K562 (cell line): ENCODE measurements at regions of chr19 and their contacts with region 1.

Region 1: DNA sequence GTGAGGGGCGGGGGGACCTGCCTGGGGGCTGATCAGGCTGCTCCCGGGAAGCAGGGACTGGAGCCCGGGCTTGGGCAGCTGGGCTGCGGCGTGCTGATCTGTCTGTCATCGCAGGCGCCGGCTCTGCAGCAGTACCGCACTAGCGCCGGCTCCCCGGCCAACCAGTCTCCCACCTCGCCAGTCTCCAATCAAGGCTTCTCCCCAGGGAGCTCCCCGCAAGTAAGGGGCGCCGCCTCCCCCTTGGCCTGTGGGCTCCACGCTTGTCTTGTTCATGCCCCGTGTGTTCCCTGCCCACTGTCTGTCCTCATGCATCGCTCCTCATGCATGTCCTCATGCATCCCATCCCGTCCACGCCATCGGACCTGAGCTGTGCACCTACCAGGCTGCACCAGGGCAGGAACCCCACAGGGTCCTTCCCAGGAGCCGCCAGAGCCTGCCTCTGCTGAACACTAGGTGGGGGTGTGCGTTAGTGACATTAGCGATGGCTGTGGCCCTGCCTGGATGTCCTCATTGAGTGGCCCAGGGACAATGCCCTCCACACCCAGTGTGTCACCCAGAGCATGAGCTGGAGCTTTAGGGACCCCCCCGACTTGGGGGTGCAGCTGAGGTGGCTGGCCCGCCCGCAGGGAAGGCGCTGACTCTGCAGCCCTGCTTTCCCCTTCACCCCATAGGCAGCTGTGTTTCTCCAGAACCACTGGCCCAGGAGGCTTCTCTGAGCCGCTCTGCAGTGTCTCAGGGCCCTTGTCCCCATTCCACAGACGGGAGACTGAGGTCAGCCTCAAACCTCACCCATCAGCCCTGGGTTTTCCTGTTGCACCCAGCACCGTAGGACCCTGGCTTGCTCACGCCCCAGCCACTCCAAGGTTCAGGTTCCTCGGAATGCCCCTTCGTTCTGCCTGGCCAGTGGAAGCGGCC is 19.5 kb downstream of the COMP start:
- DNase-seq: peak in 3 of 4 experiments; percentile 50 to 63 (median 63)
- ATAC-seq: peak; percentile 86
- H3K4me3 ChIP-seq: no peak overlapping the region
- H3K27ac ChIP-seq: no peak overlapping the region
- H3K4me1 ChIP-seq: peaks cover 0 to 66% of the 10 kb centered on the region in 2 experiments; a peak in 4 of 5 replicates
- H3K27me3 ChIP-seq: peaks cover 9 to 40% of the 10 kb centered on the region in 2 experiments; a peak in 4 of 5 replicates
- CTCF ChIP-seq: peak; percentile 72
- EP300 ChIP-seq: no peak
- POLR2A ChIP-seq: no peak
- RAD21 ChIP-seq: peak; percentile 44 to 63

Region 2: DNA sequence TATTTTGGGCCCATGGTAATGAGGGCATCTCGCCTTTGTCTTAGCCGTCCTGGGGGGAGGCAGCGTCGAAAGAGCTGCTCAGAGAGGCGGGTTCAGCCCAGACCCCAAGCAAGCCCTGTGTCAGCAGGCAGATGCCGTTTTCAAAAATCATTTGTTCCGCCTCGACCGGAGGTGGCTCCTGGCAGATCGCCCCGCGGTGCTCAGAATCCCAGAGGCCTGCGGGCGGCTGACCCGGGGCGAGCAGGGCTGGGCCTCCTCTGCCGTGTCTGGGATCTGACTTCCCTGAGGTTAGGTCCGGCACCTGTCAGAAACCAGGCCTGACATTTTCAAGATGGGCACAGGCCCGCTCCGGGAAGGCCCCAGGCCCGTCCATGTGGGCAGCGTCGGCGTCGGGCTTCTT is 52.0 kb before region 1 on chr19:
- CTCF ChIA-PET with region 1: no interaction called
- POLR2A ChIA-PET with region 1: no interaction called
- in situ Hi-C with region 1: no loop called
- intact Hi-C with region 1: no loop called
- DNase-seq: no peak
- ATAC-seq: no peak
- H3K4me3 ChIP-seq: no peak overlapping the region
- H3K27ac ChIP-seq: no peak overlapping the region
- H3K4me1 ChIP-seq: peaks cover 0 to 33% of the 10 kb centered on the region in 2 experiments; a peak in 2 of 5 replicates
- H3K27me3 ChIP-seq: peaks cover 0 to 4% of the 10 kb centered on the region in 2 experiments; a peak in 1 of 5 replicates
- CTCF ChIP-seq: no peak
- EP300 ChIP-seq: no peak
- POLR2A ChIP-seq: no peak
- RAD21 ChIP-seq: no peak

Region 3: DNA sequence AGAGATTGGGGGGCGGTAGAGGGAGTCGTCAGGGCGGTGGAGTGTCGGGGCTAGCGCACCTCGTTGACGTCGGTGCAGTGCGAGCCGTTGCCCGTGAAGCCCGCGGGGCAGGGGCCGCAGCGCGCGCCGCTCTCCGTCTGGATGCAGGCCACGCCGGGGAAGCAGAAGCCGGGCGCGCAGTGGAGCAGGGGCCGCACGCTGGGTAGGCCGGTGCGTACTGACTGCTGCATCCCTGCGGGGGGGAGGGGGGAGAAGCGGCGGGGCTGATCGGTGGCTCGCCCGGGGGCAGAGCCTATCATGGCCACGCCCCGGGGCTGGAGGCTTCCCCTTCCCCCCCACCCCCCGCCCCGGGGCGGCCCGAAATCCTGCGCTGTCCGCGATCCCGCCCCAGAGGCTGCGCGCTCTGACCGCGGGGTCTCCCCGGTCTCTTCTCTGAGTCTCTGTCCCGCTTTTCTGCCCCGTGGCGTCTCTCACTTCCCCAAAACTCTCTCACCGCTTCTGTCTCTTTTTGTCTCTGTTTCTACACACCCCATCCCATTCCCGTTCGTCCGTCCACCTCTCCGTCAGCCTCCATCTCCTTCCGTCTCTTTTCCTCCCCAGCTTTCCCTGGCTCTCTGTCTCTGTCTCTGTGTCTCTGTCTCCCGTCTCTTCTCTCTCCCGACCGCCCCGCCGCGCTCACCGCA is 18.4 kb after region 1 on chr19:
- CTCF ChIA-PET with region 1: no interaction called
- POLR2A ChIA-PET with region 1: no interaction called
- in situ Hi-C with region 1: no loop called
- intact Hi-C with region 1: no loop called
- DNase-seq: peak; percentile 70 to 92 (median 84)
- ATAC-seq: peak; percentile 54
- H3K4me3 ChIP-seq: no peak overlapping the region
- H3K27ac ChIP-seq: no peak overlapping the region
- H3K4me1 ChIP-seq: peaks cover 5 to 58% of the 10 kb centered on the region in 2 experiments; a peak in 3 of 5 replicates
- H3K27me3 ChIP-seq: peaks cover 17 to 46% of the 10 kb centered on the region in 2 experiments; a peak in 4 of 5 replicates
- CTCF ChIP-seq: no peak
- EP300 ChIP-seq: no peak
- POLR2A ChIP-seq: no peak
- RAD21 ChIP-seq: no peak

Region 4: DNA sequence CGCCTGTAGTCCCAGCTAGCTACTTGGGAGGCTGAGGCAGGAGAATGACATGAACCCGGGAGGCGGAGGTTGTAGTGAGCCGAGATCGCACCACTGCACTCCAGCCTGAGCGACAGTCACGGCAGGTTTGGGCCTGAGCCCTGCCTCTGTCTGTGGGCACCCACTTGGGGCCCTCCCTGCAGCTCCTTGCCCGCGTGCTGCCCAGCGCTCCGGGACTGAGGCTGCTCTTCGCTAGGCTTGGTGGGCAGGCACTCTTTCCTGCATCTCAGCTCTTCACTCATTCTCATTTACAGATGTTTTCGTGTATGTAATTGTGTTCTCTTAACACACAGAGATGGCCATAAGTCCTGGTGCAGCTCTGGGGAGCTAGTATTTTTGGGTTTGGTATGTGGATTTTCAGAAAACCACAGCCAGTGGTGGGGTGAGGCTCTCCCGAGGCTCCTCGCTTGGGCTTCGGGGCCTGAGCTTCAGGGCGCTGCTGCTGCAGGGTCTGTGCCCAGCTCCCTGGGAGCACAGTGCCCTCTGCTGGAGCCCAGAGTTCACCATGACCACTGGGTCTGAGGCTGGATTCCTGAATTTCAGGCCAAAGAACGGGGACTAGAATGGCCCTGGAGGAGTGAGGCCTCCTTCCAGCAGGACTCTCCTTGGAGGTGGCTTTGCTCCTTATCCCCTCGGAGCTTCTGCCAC is 75.4 kb after region 1 on chr19:
- CTCF ChIA-PET with region 1: interaction called, 3 read pairs
- POLR2A ChIA-PET with region 1: no interaction called
- in situ Hi-C with region 1: no loop called
- intact Hi-C with region 1: loop called (anchors 1 kb)
- DNase-seq: peak in 3 of 4 experiments; percentile 53 to 69 (median 65)
- ATAC-seq: peak; percentile 89
- H3K4me3 ChIP-seq: no peak overlapping the region
- H3K27ac ChIP-seq: 0 out of 3 replicates have a peak overlapping the region, but pooled peaks have one; percentile 21
- H3K4me1 ChIP-seq: peaks cover 2 to 30% of the 10 kb centered on the region in 2 experiments; a peak in 3 of 5 replicates
- H3K27me3 ChIP-seq: no peaks in the 10 kb centered on the region; a peak in 1 of 5 replicates
- CTCF ChIP-seq: peak; percentile 78 to 80 (median 80)
- EP300 ChIP-seq: no peak
- POLR2A ChIP-seq: no peak
- RAD21 ChIP-seq: peak; percentile 74 to 75

Region 5: GRCh38 chr19:18865973-18866799 is 94.6 kb after region 1 on chr19:
- CTCF ChIA-PET with region 1: no interaction called
- POLR2A ChIA-PET with region 1: no interaction called
- in situ Hi-C with region 1: no loop called
- intact Hi-C with region 1: loop called (anchors 5 kb)
- DNase-seq: peak; percentile 80 to 91 (median 90)
- ATAC-seq: peak; percentile 99
- H3K4me3 ChIP-seq: no peak overlapping the region
- H3K27ac ChIP-seq: peak overlapping the region; percentile 58; the same call in 1 of the 3 replicates
- H3K4me1 ChIP-seq: peaks cover 0 to 49% of the 10 kb centered on the region in 2 experiments; a peak in 4 of 5 replicates
- H3K27me3 ChIP-seq: no peaks in the 10 kb centered on the region
- CTCF ChIP-seq: peak; percentile 97 to 99 (median 98)
- EP300 ChIP-seq: no peak
- POLR2A ChIP-seq: no peak
- RAD21 ChIP-seq: peak; percentile 54 to 76